Mammary epithelial cell (primary cell): ENCODE measurements at regions of chr13 and their contacts with region 1.

Region 1: DNA sequence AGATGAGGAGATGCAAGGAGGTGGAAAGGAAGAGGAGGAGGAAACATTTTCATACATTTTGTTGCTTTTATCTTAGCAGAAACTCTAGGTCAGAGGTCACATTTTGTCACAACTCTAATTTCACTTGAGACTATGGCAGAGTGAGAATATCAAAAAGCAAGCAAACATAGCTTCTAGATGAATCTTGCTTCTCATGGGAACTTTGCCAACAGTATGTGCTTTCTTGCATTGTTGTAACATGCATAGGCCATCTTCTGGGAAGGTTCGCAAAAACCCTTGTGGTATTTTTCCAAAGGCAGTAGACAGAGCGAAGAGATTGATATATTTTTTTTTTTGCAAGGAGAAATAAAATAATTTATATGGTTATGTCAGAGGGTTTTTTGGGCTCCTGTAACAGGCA is 291.3 kb downstream of the MTUS2 start:
- DNase-seq: no peak
- H3K4me3 ChIP-seq: no peak overlapping the region
- H3K27ac ChIP-seq: no peak overlapping the region
- H3K4me1 ChIP-seq: no peaks in the 10 kb centered on the region
- H3K27me3 ChIP-seq: no peaks in the 10 kb centered on the region
- CTCF ChIP-seq: no peak

Region 2: DNA sequence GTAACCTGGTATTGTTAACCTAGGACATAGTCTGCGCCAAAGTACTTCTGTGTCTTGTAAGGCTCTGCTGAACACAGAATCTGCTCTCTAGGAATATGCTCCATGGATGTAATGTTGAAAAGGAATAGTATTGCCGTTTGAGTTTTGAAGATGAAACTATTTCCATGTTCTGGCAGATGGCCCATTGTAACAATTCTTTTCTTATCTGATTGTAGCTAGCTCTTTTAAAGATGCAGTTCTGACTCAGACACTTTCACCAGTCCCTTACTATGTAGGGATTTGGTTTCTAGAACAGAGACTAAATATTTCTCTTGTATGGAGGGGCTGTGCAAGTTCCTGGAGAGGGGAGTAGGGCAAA is 105.7 kb before region 1 on chr13:
- CTCF ChIA-PET with region 1: no interaction called
- dilution Hi-C with region 1: loop called (anchors 5 kb)
- in situ Hi-C with region 1: no loop called
- intact Hi-C with region 1: no loop called
- DNase-seq: no peak
- H3K4me3 ChIP-seq: no peak overlapping the region
- H3K27ac ChIP-seq: no peak overlapping the region
- H3K4me1 ChIP-seq: no peaks in the 10 kb centered on the region
- H3K27me3 ChIP-seq: no peaks in the 10 kb centered on the region
- CTCF ChIP-seq: no peak